ENCODE measurements at regions of chr5 and their contacts with region 1.

Region 1: DNA sequence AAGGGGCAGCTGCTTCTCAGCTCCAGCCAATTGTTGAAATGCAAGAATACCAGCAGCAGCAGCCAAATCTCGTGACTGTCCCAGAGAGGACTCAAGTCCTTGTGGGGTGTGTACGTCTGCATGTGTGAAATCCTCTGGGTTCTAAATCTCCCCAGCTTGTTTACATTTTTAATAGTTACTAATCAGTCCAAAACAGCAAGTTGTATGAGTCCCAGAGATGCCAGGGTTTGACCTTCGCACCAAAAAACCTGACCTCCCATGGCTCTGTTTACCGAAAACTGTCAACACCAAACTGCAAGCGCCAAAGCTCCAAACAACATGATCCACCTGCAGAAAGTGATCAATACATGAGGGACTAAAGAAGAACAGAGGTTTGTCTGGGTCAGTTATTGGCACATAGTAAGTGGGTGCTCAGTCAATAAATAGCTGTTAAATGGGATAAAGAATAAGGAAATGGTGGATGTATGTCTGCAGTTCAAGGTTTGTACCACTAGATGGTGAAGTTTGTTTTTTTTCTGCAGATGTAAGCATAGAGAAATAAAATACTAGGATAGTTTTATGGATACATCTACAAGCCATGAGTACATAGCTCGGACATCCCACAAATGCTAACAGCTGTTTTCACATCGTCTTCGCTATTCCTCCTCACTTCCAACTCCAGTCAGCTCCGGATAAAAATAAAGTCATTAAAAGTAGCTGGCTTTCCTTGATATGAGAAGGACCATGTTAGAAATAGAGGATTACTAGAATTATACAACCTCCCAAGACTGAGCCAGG is 85.3 kb upstream of the ADRB2 start:
- DNase-seq: no peak
- ATAC-seq: peak; percentile 38 to 81 (median 72)
- H3K4me3 ChIP-seq: peak overlapping the region in 1 of 10 donors; percentile 9
- H3K27ac ChIP-seq: peak overlapping the region in 1 of 10 donors; percentile 27
- H3K4me1 ChIP-seq: peaks cover 0 to 43% (median 29%) of the 10 kb centered on the region in 9 donors
- H3K27me3 ChIP-seq: no peaks in the 10 kb centered on the region
- CTCF ChIP-seq: peak; percentile 62 to 81 (median 77)

Region 2: GRCh38 chr5:148585988-148586387 is 155.2 kb before region 1 on chr5:
- intact Hi-C with region 1: no loop called
- DNase-seq: no peak
- ATAC-seq: no peak
- H3K4me3 ChIP-seq: no peak overlapping the region
- H3K27ac ChIP-seq: no peak overlapping the region
- H3K4me1 ChIP-seq: no peaks in the 10 kb centered on the region
- H3K27me3 ChIP-seq: no peaks in the 10 kb centered on the region
- CTCF ChIP-seq: peak in 2 of 9 donors; percentile 5 to 18

Region 3: DNA sequence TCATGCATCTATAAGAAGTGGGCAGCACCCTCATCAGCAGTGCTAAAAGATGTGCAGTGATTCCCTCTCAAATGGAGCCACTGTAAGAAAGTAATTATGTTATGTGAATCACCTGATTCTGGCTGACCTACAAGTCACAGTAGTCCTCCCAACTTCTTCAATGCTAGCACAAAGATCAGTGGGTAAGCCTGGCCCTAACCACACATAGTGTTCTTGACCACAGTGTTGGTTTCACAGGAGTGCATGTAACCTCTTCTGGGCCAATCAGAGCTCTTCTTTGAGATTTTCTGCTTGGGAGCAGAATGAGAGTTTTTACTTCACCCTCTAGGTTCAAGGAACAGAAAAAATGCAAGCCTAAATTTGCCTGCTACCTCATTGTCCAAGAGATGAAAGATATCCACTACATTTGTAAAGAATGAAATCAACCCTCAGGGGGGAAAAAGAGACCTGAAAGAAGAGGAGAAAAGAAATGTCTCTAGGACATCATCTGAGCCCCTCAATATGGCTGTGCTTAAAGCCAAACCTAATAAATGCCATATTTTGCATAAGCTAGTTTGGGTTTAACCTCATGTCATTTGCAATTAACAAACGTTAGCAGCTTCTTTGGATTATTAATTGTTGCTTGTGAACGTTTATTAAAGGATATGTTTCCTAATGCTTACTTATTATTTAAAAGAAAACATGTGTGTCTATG is 19.9 kb after region 1 on chr5:
- intact Hi-C with region 1: no loop called
- DNase-seq: no peak
- ATAC-seq: no peak
- H3K4me3 ChIP-seq: no peak overlapping the region
- H3K27ac ChIP-seq: no peak overlapping the region
- H3K4me1 ChIP-seq: peaks cover 0 to 3% (median 0%) of the 10 kb centered on the region in 9 donors
- H3K27me3 ChIP-seq: no peaks in the 10 kb centered on the region
- CTCF ChIP-seq: no peak

Region 4: GRCh38 chr5:148805326-148806290 is 64.5 kb after region 1 on chr5:
- intact Hi-C with region 1: loop called in 3 of 10 experiments (anchors 10 kb)
- DNase-seq: peak; percentile 51
- ATAC-seq: peak; percentile 89 to 98 (median 93)
- H3K4me3 ChIP-seq: no peak overlapping the region
- H3K27ac ChIP-seq: peak overlapping the region in 9 of 10 donors; percentile 35 to 79 (median 74)
- H3K4me1 ChIP-seq: peaks cover 4 to 64% (median 26%) of the 10 kb centered on the region in 9 donors
- H3K27me3 ChIP-seq: no peaks in the 10 kb centered on the region
- CTCF ChIP-seq: no peak

Region 5: DNA sequence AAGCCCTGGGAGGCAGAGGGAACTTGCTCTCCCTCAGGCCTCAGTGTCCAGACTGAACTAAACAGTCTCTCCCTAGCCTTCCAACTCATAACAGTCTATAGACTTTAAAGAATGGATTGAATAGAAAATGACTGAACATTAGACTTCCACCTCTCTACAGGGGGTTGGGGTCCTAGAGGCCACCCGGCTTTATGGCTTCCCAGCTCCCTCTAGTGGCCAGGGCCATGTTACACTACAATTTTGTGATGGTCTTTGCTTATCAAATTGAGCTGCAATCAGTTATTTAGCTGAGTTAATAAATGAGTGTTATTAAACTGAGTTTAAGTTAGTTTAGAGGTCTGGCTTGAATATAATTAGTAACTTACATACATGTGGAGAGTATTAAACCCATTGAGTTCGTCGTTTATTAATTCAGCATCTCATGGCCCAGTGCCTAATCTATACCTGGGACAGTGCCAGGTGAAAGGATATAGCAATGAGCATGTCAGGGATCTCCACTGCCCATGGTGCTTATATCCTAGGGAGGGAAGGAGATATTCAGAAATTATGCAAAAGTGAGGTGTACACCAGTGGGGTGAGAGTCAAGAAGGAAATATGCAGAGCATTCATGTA is 216.5 kb after region 1 on chr5:
- intact Hi-C with region 1: loop called in 6 of 10 experiments (anchors 5 kb)
- DNase-seq: no peak
- ATAC-seq: peak in 4 of 8 donors; percentile 38 to 53 (median 46)
- H3K4me3 ChIP-seq: no peak overlapping the region
- H3K27ac ChIP-seq: no peak overlapping the region
- H3K4me1 ChIP-seq: peaks cover 0 to 9% (median 0%) of the 10 kb centered on the region in 9 donors
- H3K27me3 ChIP-seq: no peaks in the 10 kb centered on the region
- CTCF ChIP-seq: peak; percentile 68 to 87 (median 81)

Region 6: GRCh38 chr5:148998174-148998797 is 257.1 kb after region 1 on chr5:
- intact Hi-C with region 1: loop called in 8 of 10 experiments (anchors 2 to 10 kb)
- DNase-seq: peak in 1 of 2 donors; percentile 49
- ATAC-seq: peak in 7 of 8 donors; percentile 39 to 66 (median 53)
- H3K4me3 ChIP-seq: no peak overlapping the region
- H3K27ac ChIP-seq: no peak overlapping the region
- H3K4me1 ChIP-seq: peaks cover 0 to 35% (median 9%) of the 10 kb centered on the region in 9 donors
- H3K27me3 ChIP-seq: no peaks in the 10 kb centered on the region
- CTCF ChIP-seq: peak; percentile 42 to 77 (median 69)

Region 7: DNA sequence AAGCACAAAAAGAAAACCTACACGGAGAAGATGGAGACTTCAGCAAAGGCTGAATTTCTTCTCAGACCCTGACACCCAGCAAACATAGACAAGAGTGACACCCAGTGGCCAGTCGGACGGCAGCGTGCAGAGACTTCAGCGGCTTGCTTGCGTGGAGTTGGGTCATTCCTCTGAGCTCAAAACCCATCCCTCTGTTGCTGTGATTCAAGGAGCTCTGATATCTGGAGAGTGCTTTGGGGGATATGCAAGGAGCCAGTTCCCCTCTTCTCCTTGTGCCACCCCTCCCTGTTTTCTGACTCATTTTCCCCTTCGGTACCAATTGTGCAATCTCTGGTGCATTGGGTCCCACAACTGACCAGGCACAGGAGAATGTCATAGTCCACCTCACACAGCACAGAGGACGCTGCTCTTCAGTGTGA is 294.2 kb after region 1 on chr5:
- intact Hi-C with region 1: loop called in 3 of 10 experiments (anchors 2 to 10 kb)
- DNase-seq: peak; percentile 70 to 81
- ATAC-seq: peak; percentile 83 to 94 (median 91)
- H3K4me3 ChIP-seq: no peak overlapping the region
- H3K27ac ChIP-seq: no peak overlapping the region
- H3K4me1 ChIP-seq: peaks cover 0 to 53% (median 25%) of the 10 kb centered on the region in 9 donors
- H3K27me3 ChIP-seq: no peaks in the 10 kb centered on the region
- CTCF ChIP-seq: peak; percentile 64 to 95 (median 90)